Prostate gland (tissue), 2 donors: ENCODE measurements at regions of chr4 and their contacts with region 1.

Region 1: DNA sequence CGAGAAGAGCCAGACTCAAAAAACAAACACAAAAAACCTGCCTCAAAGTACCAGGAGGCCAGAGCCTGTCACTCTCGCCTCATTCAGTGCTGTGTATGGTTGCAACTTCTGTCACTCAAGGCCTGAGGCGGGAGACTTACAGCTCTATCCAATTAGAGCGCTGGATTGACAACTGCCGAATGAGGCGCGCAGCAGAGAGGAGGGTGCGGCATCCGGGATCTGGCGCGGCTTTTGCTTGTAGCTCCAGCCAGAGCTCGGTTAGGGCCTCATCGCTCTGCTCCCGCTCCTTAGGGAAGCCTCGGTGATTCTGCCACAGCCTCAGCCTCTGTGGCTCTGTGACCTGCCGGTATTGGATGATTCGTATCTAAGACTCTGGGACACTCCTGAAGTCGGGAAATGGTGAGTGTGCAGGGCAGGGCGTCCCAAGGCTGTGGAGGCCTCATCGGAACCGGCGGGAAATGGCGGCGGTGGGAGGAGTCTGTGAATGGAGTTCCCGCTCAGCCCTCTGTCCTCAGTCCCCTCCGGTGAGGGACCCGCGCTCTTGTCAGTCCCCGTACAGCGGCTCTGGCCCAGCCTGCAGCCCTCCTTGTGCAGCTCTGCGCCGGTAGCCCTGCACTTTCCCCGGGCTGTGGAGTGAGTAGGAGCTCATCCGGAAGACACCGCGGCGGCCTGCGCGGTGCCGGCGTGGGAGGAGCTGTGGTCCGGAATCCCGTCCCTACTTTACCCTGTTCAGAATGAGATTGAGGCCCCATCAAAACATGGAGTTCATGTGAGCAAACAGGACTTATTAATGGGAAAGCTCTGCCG is at the start of gene ZNF718:
- DNase-seq: peak; percentile 95
- H3K4me3 ChIP-seq: peak within 1 kb of the TSS; percentile 58 to 65
- H3K27ac ChIP-seq: peak within 1 kb of the TSS; percentile 85 to 90
- H3K4me1 ChIP-seq: peaks cover 3% of the 10 kb centered on the region
- H3K27me3 ChIP-seq: no peaks in the 10 kb centered on the region
- CTCF ChIP-seq: no peak
- POLR2A ChIP-seq: peak; percentile 79
- total RNA-seq, gene ZNF718: 13.0 to 13.7 TPM

Region 2: GRCh38 chr4:212438-213188 is 88.1 kb after region 1 on chr4:
- intact Hi-C with region 1: loop called (anchors 5 kb)
- DNase-seq: peak; percentile 52
- H3K4me3 ChIP-seq: peak overlapping the region; percentile 34 to 42
- H3K27ac ChIP-seq: peak overlapping the region; percentile 53 to 65
- H3K4me1 ChIP-seq: no peaks in the 10 kb centered on the region
- H3K27me3 ChIP-seq: no peaks in the 10 kb centered on the region
- CTCF ChIP-seq: no peak
- POLR2A ChIP-seq: no peak

Region 3: GRCh38 chr4:223913-224497 is 99.5 kb after region 1 on chr4:
- intact Hi-C with region 1: no loop called
- DNase-seq: no peak
- H3K4me3 ChIP-seq: no peak overlapping the region
- H3K27ac ChIP-seq: no peak overlapping the region
- H3K4me1 ChIP-seq: no peaks in the 10 kb centered on the region
- H3K27me3 ChIP-seq: no peaks in the 10 kb centered on the region
- CTCF ChIP-seq: no peak
- POLR2A ChIP-seq: no peak